Dorsolateral prefrontal cortex (tissue), 120 donors: ENCODE measurements at regions of chr12 and their contacts with region 1.

Region 1: GRCh38 chr12:81330480-81330879 is 252.6 kb downstream of the ACSS3 start:
- DNase-seq: no peak
- H3K4me3 ChIP-seq: no peak overlapping the region
- H3K27ac ChIP-seq: peak overlapping the region in 34 of 59 donors; percentile 9 to 92 (median 78)
- H3K27me3 ChIP-seq: no peaks in the 10 kb centered on the region
- CTCF ChIP-seq: peak in 55 of 56 donors; percentile 35 to 88 (median 62)

Region 2: GRCh38 chr12:81369175-81369574 is 38.7 kb after region 1 on chr12:
- intact Hi-C with region 1: loop called in 1 of 2 experiments (anchors 5 kb)
- DNase-seq: no peak
- H3K4me3 ChIP-seq: peak overlapping the region in 55 of 59 donors; percentile 3 to 67 (median 39)
- H3K27ac ChIP-seq: peak overlapping the region in 58 of 59 donors; percentile 4 to 88 (median 66)
- H3K27me3 ChIP-seq: no peaks in the 10 kb centered on the region
- CTCF ChIP-seq: peak in 2 of 56 donors; percentile 8 to 12

Region 3: DNA sequence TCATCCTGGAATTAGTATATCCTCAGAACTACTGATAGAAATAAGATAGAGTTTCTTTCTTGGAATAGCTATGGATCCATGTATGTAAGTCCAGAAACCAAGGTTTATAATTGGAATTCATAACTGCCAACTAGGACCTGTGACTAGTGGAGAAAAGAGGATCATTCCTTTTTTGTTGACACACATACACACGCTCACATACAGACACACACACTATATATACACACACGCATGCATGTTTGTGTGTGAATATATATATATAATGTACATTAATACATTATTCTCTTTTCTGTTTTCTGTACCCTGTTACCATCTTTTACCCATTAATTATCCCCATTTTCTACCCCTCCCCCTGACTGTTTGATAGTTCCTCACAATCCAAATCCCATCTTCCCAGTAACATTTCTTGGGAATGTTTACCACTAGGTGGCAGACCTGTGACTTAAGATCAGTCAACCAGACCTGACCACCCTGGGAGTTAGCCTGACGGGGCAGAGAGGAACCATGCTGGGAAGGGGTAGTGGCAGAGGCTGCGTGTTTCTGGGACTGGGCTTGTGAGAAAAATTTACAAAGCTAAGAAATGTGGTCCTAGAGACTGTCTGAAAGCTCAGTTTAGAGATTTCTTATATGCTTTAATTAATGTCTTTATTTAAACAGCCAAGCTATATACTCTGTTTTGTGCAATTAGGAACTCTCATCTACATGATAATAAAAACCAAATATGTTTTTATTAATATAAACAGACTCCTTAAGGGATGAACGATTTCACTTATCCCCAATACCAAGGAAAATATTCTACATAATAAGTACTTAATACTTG is 120.7 kb after region 1 on chr12:
- intact Hi-C with region 1: loop called in 1 of 2 experiments (anchors 5 kb)
- DNase-seq: peak in 3 of 10 donors; percentile 28 to 43 (median 39)
- H3K4me3 ChIP-seq: peak overlapping the region in 7 of 59 donors; percentile 1 to 44 (median 18)
- H3K27ac ChIP-seq: peak overlapping the region in 1 of 59 donors; percentile 18
- H3K27me3 ChIP-seq: no peaks in the 10 kb centered on the region
- CTCF ChIP-seq: peak; percentile 42 to 79 (median 66)

Region 4: DNA sequence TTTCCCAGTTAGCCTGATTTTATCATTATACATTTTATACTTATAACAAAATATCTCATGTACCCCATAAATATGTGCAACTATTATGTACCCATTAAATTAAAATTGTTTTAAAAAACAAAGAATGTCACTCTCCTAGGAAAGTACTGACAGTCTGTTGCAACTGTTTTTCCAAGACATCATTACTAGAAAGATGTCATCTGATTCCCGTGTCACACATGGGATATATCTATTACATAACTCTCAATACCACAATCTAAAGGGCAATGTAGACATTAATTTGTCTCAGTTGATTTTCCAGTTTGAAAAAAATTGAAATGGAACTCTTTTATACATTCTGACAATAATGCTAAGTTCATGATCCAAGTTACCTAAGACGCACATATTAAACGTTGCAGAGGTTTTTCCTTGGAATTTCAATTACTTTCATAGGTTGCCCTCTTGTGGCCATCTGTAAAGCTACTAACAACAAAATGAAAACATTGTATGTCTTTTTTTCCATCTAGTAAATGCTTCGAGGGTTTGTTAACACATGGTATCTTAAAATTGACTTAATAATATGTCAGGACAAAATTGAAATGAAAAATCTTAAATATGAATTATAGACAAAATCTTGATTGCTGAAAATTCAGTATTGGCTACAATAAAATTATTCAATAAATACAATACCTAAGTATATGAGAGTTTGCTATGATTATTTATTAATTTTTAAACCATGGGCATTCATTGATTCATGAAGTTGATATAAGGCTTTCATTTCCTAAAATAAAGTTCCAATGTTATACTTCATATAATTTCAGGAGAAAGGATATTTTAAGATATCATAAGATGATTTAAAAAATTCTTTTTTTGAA is 297.1 kb after region 1 on chr12:
- intact Hi-C with region 1: loop called (anchors 5 kb)
- DNase-seq: peak in 1 of 10 donors; percentile 13
- H3K4me3 ChIP-seq: peak overlapping the region in 53 of 59 donors; percentile 1 to 59 (median 40)
- H3K27ac ChIP-seq: no peak overlapping the region
- H3K27me3 ChIP-seq: no peaks in the 10 kb centered on the region
- CTCF ChIP-seq: peak; percentile 59 to 94 (median 82)